MCF 10A (cell line): ENCODE measurements at regions of chr7 and their contacts with region 1.

Region 1: GRCh38 chr7:151925446-151926335 is 30.6 kb upstream of the GALNTL5 start:
- DNase-seq: no peak
- H3K4me3 Mint-ChIP-seq: no peak overlapping the region
- H3K27ac Mint-ChIP-seq: no peak overlapping the region
- H3K4me1 Mint-ChIP-seq: peaks cover 26% of the 10 kb centered on the region
- H3K27me3 Mint-ChIP-seq: no peaks in the 10 kb centered on the region
- CTCF ChIP-seq: no peak

Region 2: GRCh38 chr7:151936207-151936606 is 10.5 kb after region 1 on chr7:
- CTCF ChIA-PET with region 1: interaction called, 7 read pairs
- POLR2A ChIA-PET with region 1: interaction called, 21 read pairs
- intact Hi-C with region 1: no loop called
- DNase-seq: no peak
- H3K4me3 Mint-ChIP-seq: no peak overlapping the region
- H3K27ac Mint-ChIP-seq: no peak overlapping the region
- H3K4me1 Mint-ChIP-seq: peaks cover 23% of the 10 kb centered on the region
- H3K27me3 Mint-ChIP-seq: peaks cover 35% of the 10 kb centered on the region
- CTCF ChIP-seq: no peak

Region 3: DNA sequence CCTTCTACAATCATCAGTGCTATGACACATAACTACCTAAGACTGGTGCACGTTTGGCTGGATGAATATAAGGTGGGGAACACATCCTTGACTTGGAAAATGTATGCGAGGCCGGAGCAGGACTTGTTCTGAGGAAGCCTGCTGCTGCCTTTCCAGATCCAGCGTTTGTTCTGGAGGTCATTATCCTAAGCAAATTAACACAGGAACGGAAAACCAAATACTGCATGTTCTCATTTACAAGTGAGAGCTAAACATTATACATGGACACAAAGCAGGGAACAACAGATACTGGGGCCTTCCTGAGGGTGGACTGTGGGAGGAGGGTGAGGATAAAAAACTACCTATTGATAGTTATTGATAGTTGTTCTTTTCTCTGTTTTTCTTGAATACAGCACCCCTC is 89.0 kb after region 1 on chr7:
- CTCF ChIA-PET with region 1: no interaction called
- POLR2A ChIA-PET with region 1: no interaction called
- intact Hi-C with region 1: no loop called
- DNase-seq: no peak
- H3K4me3 Mint-ChIP-seq: no peak overlapping the region
- H3K27ac Mint-ChIP-seq: no peak overlapping the region
- H3K4me1 Mint-ChIP-seq: no peaks in the 10 kb centered on the region
- H3K27me3 Mint-ChIP-seq: no peaks in the 10 kb centered on the region
- CTCF ChIP-seq: no peak